T-cell (primary cell): ENCODE measurements at regions of chr2 and their contacts with region 1.

Region 1: DNA sequence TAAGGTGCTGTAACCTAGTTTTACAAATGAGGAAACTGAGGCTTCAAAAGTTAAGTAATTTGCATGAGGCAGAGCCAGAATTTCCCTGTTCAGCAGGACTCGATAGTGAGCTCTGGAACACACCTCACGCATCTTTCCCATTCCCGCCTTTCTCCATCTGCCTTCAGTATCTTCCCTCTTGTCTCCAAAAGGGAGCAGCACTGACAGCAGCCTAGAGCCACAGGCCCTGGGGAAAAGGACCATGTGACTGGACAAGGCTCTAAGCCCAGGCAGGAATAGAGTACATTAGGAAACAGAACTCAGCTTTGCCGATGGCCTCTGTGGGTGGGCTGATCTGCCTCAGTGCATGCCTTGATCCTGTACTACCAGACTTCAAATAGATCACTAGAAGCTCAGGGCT is 21.5 kb downstream of the GPR155 start:
- DNase-seq: no peak
- ATAC-seq: no peak
- H3K4me3 ChIP-seq: no peak overlapping the region
- H3K4me3 Mint-ChIP-seq: no peak overlapping the region
- H3K27ac ChIP-seq: no peak overlapping the region
- H3K27ac Mint-ChIP-seq: peak overlapping the region in 1 of 2 donors; percentile 27
- H3K4me1 ChIP-seq: no peaks in the 10 kb centered on the region
- H3K4me1 Mint-ChIP-seq: no peaks in the 10 kb centered on the region
- H3K27me3 ChIP-seq: no peaks in the 10 kb centered on the region
- H3K27me3 Mint-ChIP-seq: no peaks in the 10 kb centered on the region

Region 2: DNA sequence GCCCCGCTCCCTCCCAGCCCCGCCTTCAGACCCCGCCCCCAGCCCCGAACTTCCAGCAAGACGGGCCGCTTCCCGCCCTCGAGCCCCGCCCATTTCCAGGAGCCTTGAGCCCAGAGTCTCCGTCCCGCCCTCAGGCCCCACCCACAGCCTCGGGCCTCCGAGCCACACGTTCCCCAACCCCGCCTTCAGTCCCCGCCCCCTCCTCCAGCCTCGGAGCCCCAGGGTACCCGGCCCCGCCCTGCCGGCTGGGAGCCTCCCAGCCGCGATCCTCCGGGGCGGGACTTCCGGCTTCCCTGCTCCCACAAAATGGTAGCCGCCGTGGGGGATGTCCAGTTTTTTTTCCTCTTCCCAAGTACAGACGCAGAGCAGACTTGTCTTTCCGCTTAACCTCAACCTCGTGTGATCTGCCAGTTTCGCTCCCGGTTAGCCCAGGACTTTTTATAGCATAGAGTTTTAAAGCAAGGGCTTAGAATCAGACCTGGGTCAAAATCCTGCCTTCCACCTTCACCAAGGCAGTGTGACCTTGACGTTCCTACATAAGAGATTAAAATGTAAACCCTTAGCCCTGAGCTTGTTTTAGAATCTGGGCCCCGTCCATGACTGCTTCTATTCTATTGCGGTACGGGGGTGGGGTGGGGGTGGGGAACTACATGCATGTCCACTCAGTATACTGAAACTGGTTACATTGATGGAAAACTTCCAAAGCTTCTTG is 21.9 kb after region 1 on chr2:
- CTCF ChIA-PET with region 1: interaction called, 14 to 28 read pairs
- POLR2A ChIA-PET with region 1: interaction called, 3 to 7 read pairs
- DNase-seq: peak; percentile 72 to 99 (median 86)
- ATAC-seq: peak; percentile 82 to 87 (median 85)
- H3K4me3 ChIP-seq: peak overlapping the region; percentile 65 to 88
- H3K4me3 Mint-ChIP-seq: peak overlapping the region; percentile 91 to 98 (median 94)
- H3K27ac ChIP-seq: peak overlapping the region; percentile 76
- H3K27ac Mint-ChIP-seq: peak overlapping the region; percentile 92 to 95
- H3K4me1 ChIP-seq: peaks cover 34 to 39% of the 10 kb centered on the region in 2 experiments
- H3K4me1 Mint-ChIP-seq: peaks cover 66 to 76% (median 72%) of the 10 kb centered on the region in 3 donors
- H3K27me3 ChIP-seq: no peaks in the 10 kb centered on the region
- H3K27me3 Mint-ChIP-seq: no peaks in the 10 kb centered on the region

Region 3: DNA sequence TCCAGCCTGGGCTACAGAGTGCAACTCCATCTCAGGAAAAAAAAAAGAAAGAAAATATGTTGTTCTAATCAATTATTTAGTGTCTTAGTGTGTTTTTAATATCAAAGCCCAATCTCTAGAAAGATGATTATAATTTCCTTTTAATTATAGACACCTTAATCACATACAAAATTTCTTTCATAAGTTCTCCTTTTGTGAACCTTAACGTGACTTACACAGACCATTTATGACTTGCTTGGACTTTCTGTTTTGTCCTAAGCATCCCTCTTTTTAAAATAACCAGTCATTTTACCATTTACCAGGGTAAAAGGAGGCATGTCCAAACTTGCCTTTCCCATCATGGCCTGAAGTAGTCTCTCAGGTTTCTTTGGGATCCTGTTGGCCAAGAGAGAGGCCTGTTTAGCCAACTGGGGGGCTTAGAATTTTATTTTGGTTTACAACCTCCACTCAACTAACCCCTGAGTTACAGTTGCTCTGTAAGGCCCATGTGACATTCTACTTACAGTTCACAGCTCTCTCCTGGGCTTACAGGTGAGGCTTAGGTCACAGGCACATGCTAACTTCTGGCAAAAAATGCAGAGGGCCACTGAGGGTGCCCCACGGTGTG is 45.4 kb after region 1 on chr2:
- CTCF ChIA-PET with region 1: no interaction called
- POLR2A ChIA-PET with region 1: no interaction called
- DNase-seq: no peak
- ATAC-seq: no peak
- H3K4me3 ChIP-seq: no peak overlapping the region
- H3K4me3 Mint-ChIP-seq: no peak overlapping the region
- H3K27ac ChIP-seq: no peak overlapping the region
- H3K27ac Mint-ChIP-seq: no peak overlapping the region
- H3K4me1 ChIP-seq: peaks cover 0 to 2% of the 10 kb centered on the region in 2 experiments
- H3K4me1 Mint-ChIP-seq: peaks cover 9 to 18% (median 16%) of the 10 kb centered on the region in 3 donors
- H3K27me3 ChIP-seq: no peaks in the 10 kb centered on the region
- H3K27me3 Mint-ChIP-seq: no peaks in the 10 kb centered on the region

Region 4: GRCh38 chr2:174522553-174522952 is 57.2 kb after region 1 on chr2:
- CTCF ChIA-PET with region 1: interaction called, 6 to 33 read pairs
- POLR2A ChIA-PET with region 1: no interaction called
- DNase-seq: peak in 1 of 35 experiments; percentile 31
- ATAC-seq: no peak
- H3K4me3 ChIP-seq: no peak overlapping the region
- H3K4me3 Mint-ChIP-seq: no peak overlapping the region
- H3K27ac ChIP-seq: no peak overlapping the region
- H3K27ac Mint-ChIP-seq: no peak overlapping the region
- H3K4me1 ChIP-seq: no peaks in the 10 kb centered on the region
- H3K4me1 Mint-ChIP-seq: peaks cover 13 to 16% (median 14%) of the 10 kb centered on the region in 3 donors
- H3K27me3 ChIP-seq: no peaks in the 10 kb centered on the region
- H3K27me3 Mint-ChIP-seq: no peaks in the 10 kb centered on the region

Region 5: GRCh38 chr2:174571652-174572323 is 106.5 kb after region 1 on chr2:
- CTCF ChIA-PET with region 1: interaction called, 11 to 18 read pairs
- POLR2A ChIA-PET with region 1: no interaction called
- DNase-seq: no peak
- ATAC-seq: no peak
- H3K4me3 ChIP-seq: no peak overlapping the region
- H3K4me3 Mint-ChIP-seq: no peak overlapping the region
- H3K27ac ChIP-seq: no peak overlapping the region
- H3K27ac Mint-ChIP-seq: peak overlapping the region; percentile 55 to 66
- H3K4me1 ChIP-seq: peaks cover 0 to 36% of the 10 kb centered on the region in 2 experiments
- H3K4me1 Mint-ChIP-seq: peaks cover 60 to 70% (median 64%) of the 10 kb centered on the region in 3 donors
- H3K27me3 ChIP-seq: no peaks in the 10 kb centered on the region
- H3K27me3 Mint-ChIP-seq: no peaks in the 10 kb centered on the region

Region 6: GRCh38 chr2:174603280-174603679 is 138.0 kb after region 1 on chr2:
- CTCF ChIA-PET with region 1: interaction called, 4 to 13 read pairs
- POLR2A ChIA-PET with region 1: no interaction called
- DNase-seq: peak in 33 of 35 experiments; percentile 15 to 81 (median 41)
- ATAC-seq: peak; percentile 65 to 74 (median 70)
- H3K4me3 ChIP-seq: no peak overlapping the region
- H3K4me3 Mint-ChIP-seq: peak overlapping the region in 1 of 3 donors; percentile 15
- H3K27ac ChIP-seq: peak overlapping the region; percentile 89
- H3K27ac Mint-ChIP-seq: peak overlapping the region; percentile 91 to 93
- H3K4me1 ChIP-seq: peaks cover 50 to 69% of the 10 kb centered on the region in 2 experiments
- H3K4me1 Mint-ChIP-seq: peaks cover 88 to 98% (median 90%) of the 10 kb centered on the region in 3 donors
- H3K27me3 ChIP-seq: no peaks in the 10 kb centered on the region
- H3K27me3 Mint-ChIP-seq: no peaks in the 10 kb centered on the region

Region 7: DNA sequence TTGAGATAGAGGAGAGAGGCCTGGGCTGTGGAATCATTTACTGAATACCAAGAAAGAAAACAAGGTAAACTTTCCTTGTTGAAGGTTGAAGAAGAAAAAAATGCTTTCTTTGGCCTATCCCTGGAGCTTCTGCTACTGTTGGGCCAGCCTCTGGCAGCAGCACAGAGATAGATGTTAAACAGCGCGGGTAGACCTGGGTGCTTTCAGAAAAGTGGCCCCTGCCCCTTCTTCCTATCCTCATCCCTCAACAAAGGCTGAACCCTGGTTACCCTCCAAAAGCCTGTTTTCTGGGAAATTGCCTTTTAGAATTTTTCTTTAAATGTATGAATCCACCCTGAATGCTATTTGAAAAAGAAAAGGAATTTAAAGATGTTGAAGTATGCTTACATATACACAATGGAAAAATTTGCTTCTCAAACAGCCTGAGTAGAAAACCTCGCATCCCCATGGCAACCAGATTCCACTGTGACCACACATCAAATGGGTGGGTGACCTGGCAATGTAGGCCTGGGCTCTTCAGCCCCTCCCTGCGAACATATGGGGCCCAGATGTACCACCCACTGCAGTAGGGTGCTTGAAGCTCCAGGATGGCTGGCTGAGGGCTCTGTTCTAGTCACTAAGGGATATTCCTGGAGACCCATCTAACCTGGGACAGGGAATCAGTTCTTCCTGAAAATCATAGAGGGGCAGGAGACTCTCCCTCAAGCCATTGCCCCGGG is 322.3 kb after region 1 on chr2:
- CTCF ChIA-PET with region 1: no interaction called
- POLR2A ChIA-PET with region 1: no interaction called
- DNase-seq: no peak
- ATAC-seq: peak in 1 of 4 experiments; percentile 29
- H3K4me3 ChIP-seq: no peak overlapping the region
- H3K4me3 Mint-ChIP-seq: peak overlapping the region in 1 of 3 donors; percentile 45
- H3K27ac ChIP-seq: no peak overlapping the region
- H3K27ac Mint-ChIP-seq: peak overlapping the region in 1 of 2 donors; percentile 74
- H3K4me1 ChIP-seq: peaks cover 7 to 10% of the 10 kb centered on the region in 2 experiments
- H3K4me1 Mint-ChIP-seq: peaks cover 13 to 21% (median 18%) of the 10 kb centered on the region in 3 donors
- H3K27me3 ChIP-seq: no peaks in the 10 kb centered on the region
- H3K27me3 Mint-ChIP-seq: no peaks in the 10 kb centered on the region